Thyroid gland (tissue), 4 donors: ENCODE measurements at regions of chr1 and their contacts with region 1.

Region 1: GRCh38 chr1:3618881-3619671 is 5.7 kb upstream of the TPRG1L start:
- DNase-seq: peak; percentile 74 to 75
- H3K4me3 ChIP-seq: no peak overlapping the region
- H3K27ac ChIP-seq: no peak overlapping the region
- H3K4me1 ChIP-seq: peaks cover 12 to 29% of the 10 kb centered on the region in 2 donors
- H3K27me3 ChIP-seq: no peaks in the 10 kb centered on the region
- CTCF ChIP-seq: peak; percentile 50 to 84 (median 78)
- POLR2A ChIP-seq: no peak

Region 2: DNA sequence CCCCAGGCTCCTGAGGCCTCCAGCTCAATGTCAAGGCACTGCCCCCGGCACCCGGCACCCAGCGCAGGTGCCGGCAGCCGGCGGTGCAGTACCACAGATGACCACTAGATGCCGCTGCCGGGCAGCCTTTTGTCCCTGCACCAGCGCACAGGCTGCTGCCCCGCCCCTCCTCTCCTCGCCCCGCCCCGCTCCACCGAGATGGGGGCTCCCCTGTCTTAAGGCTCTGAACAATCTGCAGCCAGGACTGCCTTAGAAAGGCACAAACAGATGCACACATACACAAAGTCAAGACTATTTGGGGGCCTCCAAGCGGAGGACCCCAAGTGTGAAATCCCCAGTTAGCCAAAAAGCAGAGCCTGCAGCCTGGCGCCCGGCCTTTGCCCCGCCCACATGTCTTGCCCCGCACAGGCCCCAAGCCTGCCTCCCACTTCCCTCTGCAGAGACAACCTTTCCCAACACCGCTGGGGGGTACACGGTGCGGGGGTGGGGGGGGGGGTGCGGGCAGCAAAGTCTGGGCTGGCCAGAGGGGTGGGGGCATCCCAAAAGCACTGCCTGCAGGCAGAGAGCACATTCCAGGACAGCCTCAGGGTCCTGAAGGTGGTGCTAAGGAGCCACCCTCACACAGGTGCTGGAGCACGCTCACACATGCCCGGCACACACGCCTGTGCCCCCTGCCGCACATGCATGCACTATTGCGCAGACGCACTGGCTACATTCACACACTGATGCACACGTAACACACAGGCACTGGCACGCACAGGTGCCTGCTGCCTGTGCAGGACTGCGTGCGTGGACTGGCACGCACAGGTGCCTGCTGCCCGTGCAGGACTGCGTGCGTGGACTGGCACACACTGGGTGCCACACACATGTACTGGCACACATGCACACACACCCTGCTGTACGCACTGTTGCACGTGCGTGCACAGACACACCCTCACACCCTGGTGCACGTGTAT is 127.5 kb before region 1 on chr1:
- intact Hi-C with region 1: loop called (anchors 2 kb)
- DNase-seq: peak; percentile 72 to 78
- H3K4me3 ChIP-seq: no peak overlapping the region
- H3K27ac ChIP-seq: no peak overlapping the region
- H3K4me1 ChIP-seq: no peaks in the 10 kb centered on the region
- H3K27me3 ChIP-seq: no peaks in the 10 kb centered on the region
- CTCF ChIP-seq: peak; percentile 79 to 100 (median 96)
- POLR2A ChIP-seq: no peak

Region 3: DNA sequence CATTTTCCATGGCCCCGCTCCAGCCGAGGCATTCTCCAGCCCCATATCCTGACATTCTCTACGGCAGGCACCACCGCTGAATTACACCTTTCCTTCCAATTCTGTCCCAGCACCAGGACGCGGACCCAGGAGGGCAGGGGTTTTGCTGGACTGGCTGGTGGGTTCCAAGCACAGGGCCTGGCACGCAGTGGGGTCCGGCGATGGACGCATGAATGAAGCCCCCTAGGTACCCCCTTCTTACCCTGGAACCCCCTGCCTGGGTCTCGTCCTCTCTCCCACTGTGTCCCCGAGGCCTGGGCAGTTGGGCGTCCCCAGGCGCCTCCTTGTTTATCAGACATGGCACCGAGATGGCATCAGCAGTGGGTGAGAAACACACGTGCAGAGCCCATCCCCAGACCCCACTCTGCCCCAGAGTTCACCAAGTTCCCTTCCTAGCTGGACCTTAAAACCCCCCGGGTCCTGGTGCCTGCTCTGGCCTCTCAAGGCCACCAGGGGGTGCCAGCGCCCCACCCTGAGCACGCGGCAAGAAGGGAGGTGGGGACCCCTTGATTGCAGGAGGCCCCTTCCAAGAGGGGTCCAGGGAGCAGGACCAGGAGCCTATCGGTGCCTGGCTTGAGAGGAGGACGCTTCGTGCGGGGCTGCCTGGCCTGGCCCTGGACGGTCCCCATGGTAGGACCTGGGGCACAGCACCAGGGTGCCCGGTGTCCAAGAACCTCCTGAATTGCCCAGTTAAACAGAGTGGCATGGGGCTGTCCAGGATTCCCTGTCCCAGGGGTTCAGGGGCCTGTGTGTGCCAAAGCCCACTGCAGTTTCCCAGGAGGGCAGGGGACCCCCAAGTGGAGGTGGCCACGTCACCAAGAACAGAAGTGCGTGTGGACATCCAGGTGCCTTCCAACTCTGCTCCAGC is 53.9 kb before region 1 on chr1:
- intact Hi-C with region 1: loop called (anchors 5 kb)
- DNase-seq: peak; percentile 28 to 40
- H3K4me3 ChIP-seq: no peak overlapping the region
- H3K27ac ChIP-seq: no peak overlapping the region
- H3K4me1 ChIP-seq: peaks cover 6 to 8% of the 10 kb centered on the region in 2 donors
- H3K27me3 ChIP-seq: no peaks in the 10 kb centered on the region
- CTCF ChIP-seq: peak; percentile 69 to 96 (median 89)
- POLR2A ChIP-seq: no peak

Region 4: GRCh38 chr1:3772027-3772714 is 153.1 kb after region 1 on chr1:
- intact Hi-C with region 1: no loop called
- DNase-seq: peak; percentile 95 to 96
- H3K4me3 ChIP-seq: peak overlapping the region in 2 of 3 donors; percentile 49 to 65
- H3K27ac ChIP-seq: peak overlapping the region in 1 of 3 donors; percentile 64
- H3K4me1 ChIP-seq: peaks cover 42 to 57% of the 10 kb centered on the region in 2 donors
- H3K27me3 ChIP-seq: no peaks in the 10 kb centered on the region
- CTCF ChIP-seq: no peak
- POLR2A ChIP-seq: peak in 1 of 2 donors; percentile 19